ENCODE measurements at regions of chr2 and their contacts with region 1.

Region 1: GRCh38 chr2:10832203-10832936 is 19.8 kb upstream of the PDIA6 start:
- DNase-seq: peak; percentile 69 to 82
- H3K4me3 ChIP-seq: no peak overlapping the region
- H3K27ac ChIP-seq: no peak overlapping the region
- H3K4me1 ChIP-seq: no peaks in the 10 kb centered on the region
- H3K27me3 ChIP-seq: peaks cover 32% of the 10 kb centered on the region
- CTCF ChIP-seq: peak; percentile 98

Region 2: DNA sequence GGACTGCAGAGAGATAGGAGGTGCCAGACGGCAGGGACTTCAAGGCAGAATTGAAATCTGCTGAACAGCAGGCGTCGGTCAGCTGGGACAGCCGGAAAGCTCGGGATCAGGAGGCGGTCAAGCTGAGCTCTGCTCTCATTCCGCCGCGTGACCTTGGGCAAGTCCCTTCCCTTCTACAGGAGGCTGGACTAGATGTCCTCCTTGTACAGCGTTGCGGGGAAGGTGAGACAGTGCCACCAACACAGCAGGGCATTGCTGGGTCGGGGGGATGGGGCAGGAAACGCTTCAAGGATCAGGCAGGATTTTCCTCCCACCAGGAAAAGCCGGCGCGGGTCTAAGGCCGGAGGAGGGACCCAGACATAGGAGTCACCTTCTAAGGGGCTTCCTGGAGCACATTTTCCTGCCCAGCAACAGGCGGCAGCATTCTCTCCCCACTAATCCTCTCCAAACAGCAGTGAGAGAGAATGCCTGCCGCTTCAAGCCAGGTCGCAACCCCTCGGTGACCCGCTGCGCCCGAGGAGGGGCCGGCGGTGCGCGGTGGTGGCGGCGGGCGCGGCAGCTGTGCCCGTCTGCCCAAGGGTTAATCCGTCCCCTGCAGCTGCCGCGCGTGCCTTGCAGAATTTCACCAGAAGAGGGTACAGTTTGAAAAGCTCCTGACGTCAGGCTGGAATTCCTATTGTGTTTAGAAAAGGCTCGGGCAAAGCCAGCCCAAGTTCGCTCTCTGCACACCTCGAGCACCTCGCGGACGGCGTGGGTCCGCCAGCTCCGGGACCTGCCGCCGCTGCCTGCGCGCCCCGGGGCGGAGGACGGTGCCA is 79.1 kb after region 1 on chr2 and contains the start of gene KCNF1:
- CTCF ChIA-PET with region 1: interaction called, 5 read pairs
- POLR2A ChIA-PET with region 1: no interaction called
- intact Hi-C with region 1: loop called (anchors 2 kb)
- DNase-seq: peak; percentile 65 to 72
- H3K4me3 ChIP-seq: peak within 1 kb of the TSS; percentile 44
- H3K27ac ChIP-seq: no peak within 1 kb of the TSS
- H3K4me1 ChIP-seq: peaks cover 6% of the 10 kb centered on the region; the same call in 1 of the 2 replicates
- H3K27me3 ChIP-seq: 0 out of 2 replicates have a peak, but pooled peaks cover 4% of the 10 kb centered on the region
- CTCF ChIP-seq: peak; percentile 41; the same call in 1 of the 2 replicates
- total RNA-seq, gene KCNF1: 1.0 TPM in 2 replicates

Region 3: DNA sequence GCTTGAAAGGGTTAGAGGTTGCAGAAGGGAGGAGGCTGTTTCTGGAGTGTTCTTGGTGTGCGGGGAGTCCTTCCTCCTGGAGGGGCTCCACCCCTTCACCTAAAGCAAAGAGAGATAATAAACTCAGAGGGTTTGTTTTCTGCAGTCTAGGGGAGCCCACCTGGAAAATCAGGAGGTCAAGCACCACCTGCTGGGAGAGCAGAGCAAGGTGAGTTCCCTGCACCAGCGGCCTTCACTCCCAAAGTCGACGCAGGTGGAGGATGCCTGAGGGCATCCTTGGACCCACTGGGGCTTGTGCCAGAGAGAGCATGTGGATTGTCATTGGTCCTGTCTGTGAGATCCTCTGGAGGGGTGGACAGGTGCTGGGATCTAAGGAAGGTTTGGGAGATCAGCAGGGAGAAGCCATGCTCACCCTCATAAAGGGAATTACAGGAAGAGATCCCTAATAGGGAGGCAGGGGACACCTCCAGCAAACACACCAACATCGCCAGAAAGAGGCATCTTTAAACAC is 196.1 kb after region 1 on chr2:
- CTCF ChIA-PET with region 1: no interaction called
- POLR2A ChIA-PET with region 1: no interaction called
- intact Hi-C with region 1: loop called (anchors 5 kb)
- DNase-seq: no peak
- H3K4me3 ChIP-seq: no peak overlapping the region
- H3K27ac ChIP-seq: no peak overlapping the region
- H3K4me1 ChIP-seq: peaks cover 11% of the 10 kb centered on the region
- H3K27me3 ChIP-seq: no peaks in the 10 kb centered on the region
- CTCF ChIP-seq: no peak

Region 4: GRCh38 chr2:11124503-11125068 is 292.2 kb after region 1 on chr2:
- CTCF ChIA-PET with region 1: interaction called, 16 read pairs
- POLR2A ChIA-PET with region 1: no interaction called
- intact Hi-C with region 1: loop called (anchors 1 kb)
- DNase-seq: peak; percentile 54 to 84
- H3K4me3 ChIP-seq: no peak overlapping the region
- H3K27ac ChIP-seq: no peak overlapping the region
- H3K4me1 ChIP-seq: peaks cover 23% of the 10 kb centered on the region
- H3K27me3 ChIP-seq: no peaks in the 10 kb centered on the region
- CTCF ChIP-seq: peak; percentile 95

Measured in PC-9 (cell line).